PC-9 (cell line): ENCODE measurements at regions of chr2 and their contacts with region 1.

Region 1: GRCh38 chr2:20509766-20510495 is 63.1 kb downstream of the RHOB start:
- DNase-seq: peak; percentile 37 to 76
- H3K4me3 ChIP-seq: no peak overlapping the region
- H3K27ac ChIP-seq: no peak overlapping the region
- H3K4me1 ChIP-seq: peaks cover 10% of the 10 kb centered on the region
- H3K27me3 ChIP-seq: no peaks in the 10 kb centered on the region
- CTCF ChIP-seq: no peak

Region 2: GRCh38 chr2:20370191-20370590 is 139.7 kb before region 1 on chr2:
- CTCF ChIA-PET with region 1: no interaction called
- POLR2A ChIA-PET with region 1: no interaction called
- intact Hi-C with region 1: no loop called
- DNase-seq: peak in 1 of 2 experiments; percentile 26
- H3K4me3 ChIP-seq: no peak overlapping the region
- H3K27ac ChIP-seq: no peak overlapping the region
- H3K4me1 ChIP-seq: peaks cover 23% of the 10 kb centered on the region
- H3K27me3 ChIP-seq: no peaks in the 10 kb centered on the region
- CTCF ChIP-seq: no peak

Region 3: DNA sequence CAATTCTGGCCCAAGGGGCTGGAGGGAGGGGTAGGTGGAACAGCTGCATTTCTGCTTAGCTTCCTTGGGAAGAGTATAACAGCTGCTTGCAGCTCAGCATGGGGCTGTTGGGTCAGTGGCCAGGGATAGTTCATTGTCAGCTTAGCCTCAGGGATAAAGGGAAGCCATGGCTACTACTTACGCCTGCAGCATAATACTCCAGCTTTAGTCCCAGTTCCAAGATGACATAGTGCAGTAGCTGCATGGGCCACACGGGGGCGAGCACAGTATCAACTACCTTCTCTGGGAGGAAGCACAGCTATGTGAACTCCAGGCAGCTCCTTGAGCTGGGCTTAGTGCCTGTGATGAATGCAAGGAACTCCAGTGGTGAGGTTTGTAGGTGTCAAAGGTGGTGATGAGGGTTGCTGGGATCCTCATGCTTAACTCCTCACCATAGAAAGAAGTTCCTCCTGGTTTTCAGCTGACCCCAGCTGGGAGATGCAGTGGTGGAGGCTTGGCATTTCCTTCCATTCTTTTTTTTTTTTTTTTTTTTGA is 98.5 kb before region 1 on chr2:
- CTCF ChIA-PET with region 1: interaction called, 5 read pairs
- POLR2A ChIA-PET with region 1: interaction called, 16 read pairs
- intact Hi-C with region 1: no loop called
- DNase-seq: peak; percentile 68 to 83
- H3K4me3 ChIP-seq: no peak overlapping the region
- H3K27ac ChIP-seq: no peak overlapping the region
- H3K4me1 ChIP-seq: no peaks in the 10 kb centered on the region
- H3K27me3 ChIP-seq: no peaks in the 10 kb centered on the region
- CTCF ChIP-seq: peak; percentile 92

Region 4: DNA sequence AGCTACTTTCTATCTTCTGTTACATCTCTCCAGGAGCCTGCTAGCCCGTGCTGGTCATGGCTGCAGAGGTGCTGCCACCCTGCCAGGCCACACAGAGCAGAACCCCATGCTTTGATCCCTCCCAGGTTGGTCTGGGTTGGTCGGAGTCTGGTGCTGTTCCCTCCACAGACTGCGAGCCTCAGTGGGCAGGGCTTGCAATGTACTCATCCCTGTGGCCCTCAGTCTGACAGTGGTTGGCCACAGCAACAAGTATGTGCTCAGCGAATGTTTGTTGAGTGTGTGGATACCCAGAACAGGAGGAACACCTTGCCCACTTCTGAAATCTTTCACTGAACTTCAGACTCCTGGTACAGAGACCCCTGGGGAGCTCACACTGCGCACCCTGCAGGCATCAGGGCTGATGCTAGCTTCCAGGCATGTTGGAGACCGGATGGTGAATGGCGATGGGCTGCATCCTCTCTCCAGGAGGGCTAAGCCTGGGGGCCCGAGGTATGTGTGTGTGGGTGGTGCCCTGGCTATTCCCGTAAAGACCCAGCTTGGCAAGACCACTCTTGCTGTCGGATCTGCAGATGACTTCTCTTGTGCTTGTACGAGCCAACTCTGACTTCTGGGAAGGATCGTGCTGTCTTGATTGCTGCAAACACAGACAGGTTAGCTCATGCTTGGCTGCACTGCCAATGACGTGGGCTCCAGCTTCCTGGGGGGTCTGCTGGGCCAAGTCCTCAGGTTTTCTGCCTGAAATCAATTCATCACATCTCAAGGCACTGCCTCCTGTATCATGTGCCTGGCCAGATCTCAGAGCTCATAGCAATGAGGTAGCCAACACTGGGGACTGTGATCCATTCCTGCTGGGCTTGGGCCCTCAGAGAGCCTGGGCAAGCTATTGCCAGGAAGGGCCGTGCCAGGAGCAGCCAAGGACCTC is 19.4 kb before region 1 on chr2:
- CTCF ChIA-PET with region 1: no interaction called
- POLR2A ChIA-PET with region 1: no interaction called
- intact Hi-C with region 1: no loop called
- DNase-seq: no peak
- H3K4me3 ChIP-seq: no peak overlapping the region
- H3K27ac ChIP-seq: no peak overlapping the region
- H3K4me1 ChIP-seq: peaks cover 46% of the 10 kb centered on the region
- H3K27me3 ChIP-seq: no peaks in the 10 kb centered on the region
- CTCF ChIP-seq: no peak

Region 5: DNA sequence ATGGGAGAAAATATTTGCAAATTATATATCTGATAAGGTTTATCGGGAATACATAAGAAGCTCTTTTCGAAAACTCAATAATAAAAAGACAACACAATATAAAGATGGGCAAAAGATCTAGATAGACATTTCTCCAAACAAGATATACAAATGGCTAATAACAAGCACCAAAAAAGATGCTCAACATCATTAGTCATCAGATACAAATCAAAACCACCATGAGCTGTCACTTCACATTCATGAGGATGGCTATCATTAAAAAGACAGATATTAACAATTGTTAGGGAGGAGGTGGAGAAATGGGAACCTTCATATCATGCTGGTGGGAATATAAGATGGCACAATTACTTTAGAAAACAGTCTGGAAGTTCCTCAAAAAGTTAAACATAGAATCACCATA is 92.9 kb after region 1 on chr2:
- CTCF ChIA-PET with region 1: no interaction called
- POLR2A ChIA-PET with region 1: interaction called, 12 read pairs
- intact Hi-C with region 1: no loop called
- DNase-seq: no peak
- H3K4me3 ChIP-seq: no peak overlapping the region
- H3K27ac ChIP-seq: no peak overlapping the region
- H3K4me1 ChIP-seq: peaks cover 4% of the 10 kb centered on the region
- H3K27me3 ChIP-seq: no peaks in the 10 kb centered on the region
- CTCF ChIP-seq: no peak

Region 6: GRCh38 chr2:20617892-20618467 is 108.0 kb after region 1 on chr2:
- CTCF ChIA-PET with region 1: no interaction called
- POLR2A ChIA-PET with region 1: interaction called, 10 read pairs
- intact Hi-C with region 1: no loop called
- DNase-seq: peak; percentile 92 to 95
- H3K4me3 ChIP-seq: no peak overlapping the region
- H3K27ac ChIP-seq: peak overlapping the region; percentile 72
- H3K4me1 ChIP-seq: peaks cover 60% of the 10 kb centered on the region
- H3K27me3 ChIP-seq: no peaks in the 10 kb centered on the region
- CTCF ChIP-seq: peak; percentile 47; the same call in 1 of the 2 replicates